ENCODE measurements at regions of chr15 and their contacts with region 1.

Region 1: DNA sequence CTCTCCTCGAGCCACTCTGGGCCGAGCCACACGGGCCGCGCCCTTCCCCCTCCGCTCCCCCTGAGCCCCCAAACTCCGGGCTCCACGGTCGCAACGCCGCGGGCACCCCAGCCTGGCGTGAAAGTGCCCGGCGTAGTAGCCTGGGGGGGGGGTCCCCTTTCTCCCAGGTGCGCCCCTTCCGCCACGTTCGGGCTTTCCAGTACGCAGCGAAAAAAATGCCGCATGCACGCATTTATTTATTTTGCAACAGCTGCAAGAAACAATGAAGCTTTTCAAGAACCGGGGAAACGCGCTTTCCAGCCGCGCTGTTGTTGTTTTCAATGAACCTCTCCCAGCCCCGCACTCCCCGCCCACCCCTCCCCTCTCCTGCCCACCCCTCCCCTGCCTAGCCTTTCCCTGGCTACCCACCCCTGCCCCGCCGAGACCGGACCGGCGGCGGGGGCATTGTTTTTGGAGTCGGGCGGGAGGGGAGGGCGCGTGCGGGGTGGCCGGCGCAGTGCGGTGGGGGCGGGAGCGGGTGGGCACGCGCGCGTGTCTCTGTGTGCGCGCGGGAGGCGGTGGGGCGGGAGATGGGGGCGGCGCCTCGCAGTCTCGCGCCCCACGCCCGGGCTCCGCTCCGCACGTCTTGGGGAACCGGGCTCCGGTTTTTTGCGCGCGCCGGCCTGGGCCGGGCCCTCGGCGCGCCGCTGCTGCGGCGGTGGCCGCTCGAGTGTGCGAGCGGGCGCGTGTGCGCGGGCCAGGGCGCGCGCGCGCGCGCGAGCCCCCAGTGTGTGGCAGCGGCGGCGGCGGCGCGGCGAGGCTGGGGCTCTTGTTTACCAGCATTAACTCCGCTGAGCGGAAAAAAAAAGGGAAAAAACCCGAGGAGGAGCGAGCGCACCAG is at the start of gene IGF1R:
- DNase-seq: peak; percentile 86 to 95 (median 95)
- ATAC-seq: peak; percentile 82 to 84
- H3K4me3 ChIP-seq: peak within 1 kb of the TSS; percentile 100
- H3K27ac ChIP-seq: peak within 1 kb of the TSS; percentile 99
- H3K4me1 ChIP-seq: no peaks in the 10 kb centered on the region
- H3K27me3 ChIP-seq: peaks cover 3% of the 10 kb centered on the region
- total RNA-seq, gene IGF1R: 31.0 to 52.3 (median 39.1) TPM

Region 2: GRCh38 chr15:98518823-98519561 is 129.0 kb before region 1 on chr15:
- intact Hi-C with region 1: loop called in 3 of 4 experiments (anchors 5 to 10 kb)
- DNase-seq: peak in 2 of 3 donors; percentile 40 to 49
- ATAC-seq: peak; percentile 79 to 83
- H3K4me3 ChIP-seq: no peak overlapping the region
- H3K27ac ChIP-seq: no peak overlapping the region
- H3K4me1 ChIP-seq: no peaks in the 10 kb centered on the region
- H3K27me3 ChIP-seq: no peaks in the 10 kb centered on the region

Region 3: GRCh38 chr15:98525661-98526001 is 122.4 kb before region 1 on chr15:
- intact Hi-C with region 1: loop called in 1 of 4 experiments (anchors 10 kb)
- DNase-seq: peak; percentile 35 to 69 (median 65)
- ATAC-seq: peak; percentile 29 to 41
- H3K4me3 ChIP-seq: no peak overlapping the region
- H3K27ac ChIP-seq: no peak overlapping the region
- H3K4me1 ChIP-seq: no peaks in the 10 kb centered on the region
- H3K27me3 ChIP-seq: no peaks in the 10 kb centered on the region

Region 4: DNA sequence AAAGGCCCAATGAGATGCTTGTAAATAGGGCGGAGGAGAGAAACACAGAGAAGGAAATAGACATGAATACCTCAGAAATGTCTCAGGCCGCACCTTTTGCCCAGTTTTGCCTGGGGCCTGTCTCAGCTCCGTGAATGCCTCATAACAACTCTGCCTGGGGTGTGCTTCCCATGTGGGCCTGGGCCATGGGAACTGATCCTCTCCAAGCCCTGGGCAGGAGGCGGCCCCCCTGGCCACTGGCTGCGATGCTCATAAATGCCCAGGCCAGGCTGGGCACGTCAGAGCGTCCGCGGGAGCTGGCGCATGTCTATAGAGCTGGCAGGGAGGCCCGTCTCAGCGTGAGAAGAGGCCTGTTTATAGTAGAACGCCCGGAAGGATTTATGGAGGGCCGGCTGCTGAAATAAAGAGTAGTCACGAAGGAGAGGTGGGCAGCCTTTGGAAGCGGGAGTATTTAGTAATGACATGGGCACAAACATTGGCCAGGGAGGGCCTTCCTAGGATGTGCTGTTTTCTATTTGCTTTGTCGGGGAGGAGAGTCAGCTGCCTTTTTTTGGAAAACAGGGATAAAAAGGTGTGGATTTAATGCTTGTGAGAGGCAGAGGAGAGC is 85.6 kb before region 1 on chr15:
- intact Hi-C with region 1: no loop called
- DNase-seq: no peak
- ATAC-seq: no peak
- H3K4me3 ChIP-seq: no peak overlapping the region
- H3K27ac ChIP-seq: no peak overlapping the region
- H3K4me1 ChIP-seq: no peaks in the 10 kb centered on the region
- H3K27me3 ChIP-seq: no peaks in the 10 kb centered on the region

Region 5: DNA sequence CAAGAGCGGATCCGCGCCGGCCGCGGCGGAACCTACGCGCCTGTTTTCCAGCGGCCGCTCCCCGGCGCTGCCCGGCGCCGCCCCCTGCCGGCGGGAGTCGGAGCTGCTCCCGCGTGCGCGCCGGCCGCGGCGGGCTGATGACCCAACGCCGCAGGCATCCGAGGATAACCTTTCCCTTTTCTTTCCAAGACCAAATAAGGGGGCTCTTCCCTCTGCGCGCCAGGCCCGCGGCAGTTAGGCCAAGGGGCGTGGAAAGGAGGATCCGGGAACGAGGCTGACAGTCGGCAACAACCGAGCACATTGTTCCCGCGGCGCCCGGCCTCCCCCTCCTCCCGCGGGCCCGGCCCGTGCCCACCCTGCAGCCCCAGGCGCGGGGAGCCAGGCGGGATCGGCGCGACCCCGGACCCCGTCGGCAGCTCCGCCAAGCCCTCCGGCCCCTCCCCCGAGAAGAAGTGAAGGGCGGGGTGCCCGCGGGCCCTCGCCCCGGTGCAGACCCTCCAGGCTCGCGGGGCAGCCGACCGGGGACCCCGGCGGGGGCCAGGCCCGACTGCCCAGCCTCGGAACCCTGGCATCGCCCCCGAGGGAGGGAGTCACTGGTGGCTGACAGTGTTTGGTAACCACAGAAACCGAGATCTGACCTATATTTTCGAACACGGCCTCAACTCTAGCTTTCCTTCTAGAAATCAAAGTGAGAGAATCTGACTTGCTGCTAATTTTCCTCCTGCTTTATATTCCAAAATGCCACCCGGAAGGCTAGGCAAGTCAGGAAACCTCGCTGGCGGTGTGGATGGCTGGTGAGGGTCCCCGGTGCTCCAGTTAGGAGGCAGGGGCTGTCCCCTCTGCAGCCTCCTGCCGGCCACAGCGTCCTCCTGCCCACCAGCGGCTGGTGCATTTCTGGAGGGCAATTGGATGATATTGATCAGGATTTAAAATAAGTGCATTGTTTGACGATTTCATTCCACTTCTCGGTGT is 411.3 kb after region 1 on chr15:
- intact Hi-C with region 1: loop called in 2 of 4 experiments (anchors 5 to 10 kb)
- DNase-seq: peak; percentile 88 to 93 (median 92)
- ATAC-seq: peak; percentile 90 to 93
- H3K4me3 ChIP-seq: peak overlapping the region; percentile 58
- H3K27ac ChIP-seq: peak overlapping the region; percentile 68
- H3K4me1 ChIP-seq: peaks cover 2% of the 10 kb centered on the region
- H3K27me3 ChIP-seq: no peaks in the 10 kb centered on the region

Region 6: GRCh38 chr15:99068186-99068585 is 420.2 kb after region 1 on chr15:
- intact Hi-C with region 1: loop called in 1 of 4 experiments (anchors 10 kb)
- DNase-seq: no peak
- ATAC-seq: no peak
- H3K4me3 ChIP-seq: no peak overlapping the region
- H3K27ac ChIP-seq: no peak overlapping the region
- H3K4me1 ChIP-seq: no peaks in the 10 kb centered on the region
- H3K27me3 ChIP-seq: no peaks in the 10 kb centered on the region